Endothelial cell of umbilical vein (primary cell): ENCODE measurements at regions of chr3 and their contacts with region 1.

Region 1: GRCh38 chr3:18444595-18445400 is 19.7 kb upstream of the SATB1 start:
- DNase-seq: peak; percentile 35
- H3K4me3 ChIP-seq: peak overlapping the region; percentile 12 to 40 (median 34)
- H3K27ac ChIP-seq: no peak overlapping the region
- H3K4me1 ChIP-seq: peaks cover 6% of the 10 kb centered on the region
- H3K27me3 ChIP-seq: peaks cover 28 to 53% of the 10 kb centered on the region in 2 experiments
- CTCF ChIP-seq: peak; percentile 28 to 46
- POLR2A ChIP-seq: no peak

Region 2: DNA sequence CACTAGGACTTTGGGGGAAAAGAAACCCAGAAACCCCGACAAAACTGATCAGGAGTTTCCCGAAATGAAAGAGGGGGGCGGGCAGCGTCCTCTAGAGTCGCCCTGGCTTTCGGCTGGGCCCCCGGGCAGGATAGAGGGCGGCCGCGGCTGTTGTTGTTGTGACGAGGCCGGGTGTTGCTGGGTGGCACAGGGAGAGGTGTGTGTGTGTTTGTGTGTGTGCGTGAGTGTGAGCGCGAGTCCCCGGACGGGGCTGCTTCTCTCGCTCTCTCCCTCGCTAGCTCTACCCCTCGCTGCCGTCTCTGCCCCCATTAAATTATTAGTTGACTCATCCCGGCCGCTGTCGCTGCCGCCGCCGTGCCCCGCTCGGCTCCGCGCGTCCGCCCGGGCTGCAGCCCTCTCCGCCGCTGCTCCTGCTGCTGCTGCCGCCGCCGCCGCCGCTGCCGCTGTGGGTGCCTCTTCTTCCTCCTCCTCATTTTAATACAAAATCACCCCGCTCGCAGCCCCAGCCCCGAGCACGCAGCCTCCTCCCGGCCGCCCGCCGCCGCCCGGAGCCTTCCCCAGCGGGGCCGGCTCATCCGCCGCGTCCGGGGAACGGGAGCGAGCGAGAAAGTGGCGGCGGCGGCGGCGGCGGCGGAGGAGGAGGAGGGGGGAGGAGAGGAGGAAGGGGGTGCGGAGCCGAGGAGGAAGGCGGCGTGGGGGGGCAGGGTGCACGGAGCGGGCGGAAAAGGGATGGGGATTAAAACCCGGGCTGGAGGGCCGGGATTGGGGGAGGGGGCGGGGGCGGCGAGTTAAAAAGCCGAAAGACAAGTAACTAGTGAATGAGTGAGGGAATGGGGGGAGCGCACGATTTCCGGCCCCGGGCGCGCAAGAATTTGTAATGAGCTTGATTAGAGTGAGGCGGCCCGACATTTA is 19.8 kb before region 1 on chr3 and contains the start of gene SATB1:
- CTCF ChIA-PET with region 1: interaction called, 11 read pairs
- POLR2A ChIA-PET with region 1: no interaction called
- dilution Hi-C with region 1: no loop called
- intact Hi-C with region 1: loop called (anchors 1 kb)
- DNase-seq: peak; percentile 48
- H3K4me3 ChIP-seq: peak within 1 kb of the TSS; percentile 66 to 72 (median 68)
- H3K27ac ChIP-seq: no peak within 1 kb of the TSS
- H3K4me1 ChIP-seq: peaks cover 8% of the 10 kb centered on the region
- H3K27me3 ChIP-seq: peaks cover 10 to 39% of the 10 kb centered on the region in 2 experiments
- CTCF ChIP-seq: no peak
- POLR2A ChIP-seq: no peak
- total RNA-seq, gene SATB1: 6.2 and 6.7 TPM in 2 replicates